Activated B cell treated with CpG ODN at 0.5 μM for 24 hours (primary cell): ENCODE measurements at regions of chr17 and their contacts with region 1.

Region 1: DNA sequence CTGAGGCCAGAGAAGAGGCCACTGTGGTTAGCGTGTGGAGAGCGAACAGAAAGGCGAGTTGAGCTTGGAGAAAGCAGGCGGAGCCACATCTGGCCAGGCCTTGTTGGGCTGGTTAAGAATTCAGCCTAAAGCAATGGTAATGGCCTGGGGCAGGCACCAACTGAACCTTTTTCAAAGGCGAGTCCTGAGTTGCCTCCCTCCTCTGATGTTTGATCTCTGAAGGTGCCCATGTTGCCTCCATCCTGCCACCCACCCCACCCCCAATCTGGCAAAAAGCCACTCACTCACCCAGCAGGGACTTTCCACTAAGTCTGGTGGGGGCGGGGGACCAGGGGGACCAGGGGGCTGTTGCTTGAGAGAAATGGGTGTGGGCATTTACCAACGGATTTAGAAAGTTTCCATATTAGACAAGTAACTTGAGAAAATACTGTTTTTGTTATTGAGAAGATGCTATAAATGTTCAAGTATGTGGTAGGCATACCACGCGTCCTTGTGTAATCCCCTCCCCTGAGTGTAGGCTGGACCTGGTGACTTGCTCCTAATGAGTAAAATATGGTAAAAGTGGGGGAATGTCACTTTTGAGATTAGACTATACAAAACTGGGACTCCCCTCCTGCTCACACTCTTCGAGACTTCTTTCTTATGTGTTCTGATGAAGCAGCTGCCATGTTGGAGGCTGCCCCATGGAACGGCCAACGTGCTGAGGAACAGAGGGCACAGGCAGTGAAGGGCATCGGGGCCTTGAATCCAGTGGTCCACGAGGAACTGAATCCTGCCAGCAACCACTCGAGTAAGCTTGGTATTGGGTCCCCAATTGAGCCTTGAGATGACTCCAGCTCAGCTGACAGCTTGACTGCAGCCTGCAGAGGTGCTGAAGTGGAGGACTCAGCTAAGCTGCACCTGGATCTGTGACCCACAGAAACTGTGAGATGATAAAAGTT is 29.9 kb upstream of the TNS4 start:
- DNase-seq: no peak
- ATAC-seq: peak; percentile 26
- H3K4me3 Mint-ChIP-seq: peak overlapping the region; percentile 42
- H3K27ac Mint-ChIP-seq: peak overlapping the region; percentile 93
- H3K4me1 Mint-ChIP-seq: peaks cover 61% of the 10 kb centered on the region
- H3K27me3 Mint-ChIP-seq: no peaks in the 10 kb centered on the region
- CTCF ChIP-seq: no peak

Region 2: DNA sequence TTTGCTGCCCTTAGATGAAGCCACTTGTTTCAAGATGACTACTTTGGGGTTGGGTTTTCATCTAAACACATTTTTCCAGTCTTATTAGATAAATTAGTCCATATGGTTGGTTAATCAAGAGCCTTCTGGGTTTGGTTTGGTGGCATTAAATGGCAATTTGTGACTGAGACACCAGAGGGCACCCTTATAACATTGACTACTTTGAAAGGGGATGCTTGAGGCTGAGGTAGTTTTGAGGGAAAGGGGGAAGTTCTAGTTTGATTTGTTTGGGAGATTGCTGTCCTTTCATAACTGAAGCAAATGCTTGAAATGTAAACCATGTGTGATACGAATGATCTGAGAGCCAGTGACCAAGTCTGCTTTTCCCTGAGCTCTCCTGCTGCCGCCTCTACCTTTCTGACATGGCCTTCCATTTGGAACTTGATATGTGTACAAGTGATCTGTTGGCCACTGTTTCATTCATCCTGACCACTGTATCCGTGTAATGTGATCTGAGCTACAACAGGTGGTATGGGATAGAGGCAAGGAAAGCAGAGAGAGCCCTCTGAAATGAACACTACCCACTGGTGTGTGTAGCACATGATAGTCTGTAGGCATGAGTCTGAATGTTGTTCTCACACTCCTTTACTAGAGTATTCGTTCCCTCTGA is 228.2 kb before region 1 on chr17:
- CTCF ChIA-PET with region 1: interaction called, 14 read pairs
- POLR2A ChIA-PET with region 1: no interaction called
- intact Hi-C with region 1: loop called (anchors 2 kb)
- DNase-seq: no peak
- ATAC-seq: peak; percentile 83
- H3K4me3 Mint-ChIP-seq: no peak overlapping the region
- H3K27ac Mint-ChIP-seq: no peak overlapping the region
- H3K4me1 Mint-ChIP-seq: peaks cover 7% of the 10 kb centered on the region
- H3K27me3 Mint-ChIP-seq: no peaks in the 10 kb centered on the region
- CTCF ChIP-seq: no peak

Region 3: DNA sequence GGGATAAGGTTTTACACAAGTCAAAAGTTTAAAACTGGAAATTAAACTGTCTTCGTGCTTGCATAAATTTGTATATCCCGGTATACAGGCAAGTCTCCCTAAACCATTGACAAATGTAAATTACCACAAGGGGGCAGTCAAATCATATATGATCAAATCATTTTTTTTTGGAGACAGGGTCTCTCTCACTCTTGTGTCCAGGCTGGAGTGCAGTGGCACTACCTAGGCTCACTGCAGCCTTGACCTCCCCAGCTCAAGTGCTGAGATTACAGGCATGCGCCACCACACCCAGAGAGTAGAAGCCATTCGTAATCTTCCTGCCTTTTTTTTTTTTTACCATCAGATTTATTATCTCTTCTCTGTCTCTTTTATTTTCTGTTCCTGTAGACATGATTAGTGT is 132.1 kb before region 1 on chr17:
- CTCF ChIA-PET with region 1: interaction called, 62 read pairs
- POLR2A ChIA-PET with region 1: interaction called, 6 read pairs
- intact Hi-C with region 1: loop called (anchors 1 kb)
- DNase-seq: no peak
- ATAC-seq: peak; percentile 61
- H3K4me3 Mint-ChIP-seq: no peak overlapping the region
- H3K27ac Mint-ChIP-seq: no peak overlapping the region
- H3K4me1 Mint-ChIP-seq: peaks cover 15% of the 10 kb centered on the region
- H3K27me3 Mint-ChIP-seq: no peaks in the 10 kb centered on the region
- CTCF ChIP-seq: no peak

Region 4: GRCh38 chr17:40474419-40475002 is 56.8 kb before region 1 on chr17:
- CTCF ChIA-PET with region 1: interaction called, 64 read pairs
- POLR2A ChIA-PET with region 1: interaction called, 18 read pairs
- intact Hi-C with region 1: no loop called
- DNase-seq: no peak
- ATAC-seq: no peak
- H3K4me3 Mint-ChIP-seq: no peak overlapping the region
- H3K27ac Mint-ChIP-seq: no peak overlapping the region
- H3K4me1 Mint-ChIP-seq: peaks cover 16% of the 10 kb centered on the region
- H3K27me3 Mint-ChIP-seq: peaks cover 7% of the 10 kb centered on the region
- CTCF ChIP-seq: no peak

Region 5: GRCh38 chr17:40542558-40543411 is 11.5 kb after region 1 on chr17:
- CTCF ChIA-PET with region 1: interaction called, 76 read pairs
- POLR2A ChIA-PET with region 1: interaction called, 1,450 read pairs
- intact Hi-C with region 1: no loop called
- DNase-seq: peak; percentile 40
- ATAC-seq: peak; percentile 63
- H3K4me3 Mint-ChIP-seq: peak overlapping the region; percentile 68
- H3K27ac Mint-ChIP-seq: peak overlapping the region; percentile 93
- H3K4me1 Mint-ChIP-seq: peaks cover 77% of the 10 kb centered on the region
- H3K27me3 Mint-ChIP-seq: no peaks in the 10 kb centered on the region
- CTCF ChIP-seq: no peak

Region 6: GRCh38 chr17:40647624-40648383 is 116.5 kb after region 1 on chr17 and contains the start of gene SMARCE1:
- CTCF ChIA-PET with region 1: no interaction called
- POLR2A ChIA-PET with region 1: interaction called, 11 read pairs
- intact Hi-C with region 1: no loop called
- DNase-seq: peak; percentile 75
- ATAC-seq: peak; percentile 84
- H3K4me3 Mint-ChIP-seq: peak within 1 kb of the TSS; percentile 98
- H3K27ac Mint-ChIP-seq: peak within 1 kb of the TSS; percentile 99
- H3K4me1 Mint-ChIP-seq: peaks cover 48% of the 10 kb centered on the region
- H3K27me3 Mint-ChIP-seq: no peaks in the 10 kb centered on the region
- CTCF ChIP-seq: no peak
- total RNA-seq, gene SMARCE1: 140 TPM in 2 replicates

Region 7: GRCh38 chr17:40750391-40750790 is 219.1 kb after region 1 on chr17:
- CTCF ChIA-PET with region 1: no interaction called
- POLR2A ChIA-PET with region 1: no interaction called
- intact Hi-C with region 1: no loop called
- DNase-seq: no peak
- ATAC-seq: no peak
- H3K4me3 Mint-ChIP-seq: no peak overlapping the region
- H3K27ac Mint-ChIP-seq: no peak overlapping the region
- H3K4me1 Mint-ChIP-seq: no peaks in the 10 kb centered on the region
- H3K27me3 Mint-ChIP-seq: peaks cover 44% of the 10 kb centered on the region
- CTCF ChIP-seq: no peak

Region 8: GRCh38 chr17:41026715-41027471 is 495.6 kb after region 1 on chr17 and contains the start of gene KRTAP1-5:
- CTCF ChIA-PET with region 1: no interaction called
- POLR2A ChIA-PET with region 1: no interaction called
- intact Hi-C with region 1: no loop called
- DNase-seq: no peak
- ATAC-seq: no peak
- H3K4me3 Mint-ChIP-seq: no peak within 1 kb of the TSS
- H3K27ac Mint-ChIP-seq: no peak within 1 kb of the TSS
- H3K4me1 Mint-ChIP-seq: no peaks in the 10 kb centered on the region
- H3K27me3 Mint-ChIP-seq: peaks cover 35% of the 10 kb centered on the region
- CTCF ChIP-seq: no peak
- total RNA-seq, gene KRTAP1-5: not detected in 2 replicates